BJ (cell line): ENCODE measurements at regions of chr20 and their contacts with region 1.

Region 1: GRCh38 chr20:44747166-44748004 is 1.7 kb downstream of the KCNK15 start:
- DNase-seq: no peak
- H3K4me3 ChIP-seq: no peak overlapping the region
- H3K27me3 ChIP-seq: peaks cover 11% of the 10 kb centered on the region
- CTCF ChIP-seq: peak; percentile 81

Region 2: GRCh38 chr20:44637522-44638372 is 109.6 kb before region 1 on chr20:
- CTCF ChIA-PET with region 1: no interaction called
- POLR2A ChIA-PET with region 1: no interaction called
- DNase-seq: no peak
- H3K4me3 ChIP-seq: no peak overlapping the region
- H3K27me3 ChIP-seq: no peaks in the 10 kb centered on the region
- CTCF ChIP-seq: no peak

Region 3: GRCh38 chr20:44861531-44862006 is 114.2 kb after region 1 on chr20:
- CTCF ChIA-PET with region 1: interaction called, 28 read pairs
- POLR2A ChIA-PET with region 1: no interaction called
- DNase-seq: peak; percentile 26
- H3K4me3 ChIP-seq: no peak overlapping the region
- H3K27me3 ChIP-seq: peaks cover 2% of the 10 kb centered on the region; the same call in 1 of the 2 replicates
- CTCF ChIP-seq: no peak

Region 4: DNA sequence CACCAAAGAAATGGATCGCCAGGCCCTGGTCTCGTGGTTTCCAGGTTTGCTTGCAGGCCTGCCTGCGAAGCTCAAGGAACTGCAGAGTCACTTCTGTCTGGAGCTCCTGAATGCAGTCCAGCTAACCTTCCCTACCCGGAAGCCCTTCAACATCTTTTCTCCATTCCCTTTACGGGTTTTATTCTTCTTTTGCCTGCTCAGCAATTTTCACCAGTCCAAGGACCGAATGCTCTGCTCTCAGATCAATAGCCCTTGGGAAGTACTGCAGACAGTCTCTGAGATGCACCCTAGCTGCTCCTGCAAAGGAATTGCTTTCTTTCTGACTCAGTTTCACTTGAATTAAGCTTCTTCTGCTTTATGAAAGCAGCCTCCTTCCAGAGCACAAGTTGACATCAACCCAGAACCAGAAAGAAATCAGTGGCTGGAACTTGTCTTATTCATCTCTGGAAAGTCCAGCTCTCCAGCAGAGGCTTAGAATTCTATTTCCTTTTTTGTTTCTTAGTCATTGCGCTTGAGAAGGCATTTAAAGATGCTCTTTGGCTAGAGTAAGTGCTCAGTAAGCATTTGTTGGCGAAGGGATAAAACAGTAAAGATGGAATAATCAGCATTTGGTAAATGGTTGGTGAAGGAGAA is 119.4 kb after region 1 on chr20:
- CTCF ChIA-PET with region 1: interaction called, 28 read pairs
- POLR2A ChIA-PET with region 1: no interaction called
- DNase-seq: no peak
- H3K4me3 ChIP-seq: no peak overlapping the region
- H3K27me3 ChIP-seq: peaks cover 7% of the 10 kb centered on the region
- CTCF ChIP-seq: no peak